ENCODE measurements at regions of chr6 and their contacts with region 1.

Region 1: GRCh38 chr6:32166411-32167061 is 2.1 kb downstream of the EGFL8 start:
- DNase-seq: no peak
- H3K4me3 ChIP-seq: no peak overlapping the region
- H3K27ac ChIP-seq: peak overlapping the region; percentile 18 to 38
- H3K4me1 ChIP-seq: no peaks in the 10 kb centered on the region
- H3K27me3 ChIP-seq: no peaks in the 10 kb centered on the region
- CTCF ChIP-seq: no peak
- POLR2A ChIP-seq: no peak

Region 2: GRCh38 chr6:32123681-32124080 is 42.9 kb before region 1 on chr6:
- intact Hi-C with region 1: loop called (anchors 1 kb)
- DNase-seq: no peak
- H3K4me3 ChIP-seq: no peak overlapping the region
- H3K27ac ChIP-seq: no peak overlapping the region
- H3K4me1 ChIP-seq: peaks cover 6 to 17% of the 10 kb centered on the region in 2 donors
- H3K27me3 ChIP-seq: no peaks in the 10 kb centered on the region
- CTCF ChIP-seq: no peak
- POLR2A ChIP-seq: no peak

Region 3: GRCh38 chr6:32195652-32195901 is 29.0 kb after region 1 on chr6:
- intact Hi-C with region 1: no loop called
- DNase-seq: peak; percentile 100
- H3K4me3 ChIP-seq: peak overlapping the region; percentile 73 to 92 (median 87)
- H3K27ac ChIP-seq: peak overlapping the region; percentile 100
- H3K4me1 ChIP-seq: peaks cover 3 to 10% of the 10 kb centered on the region in 2 donors
- H3K27me3 ChIP-seq: no peaks in the 10 kb centered on the region
- CTCF ChIP-seq: peak in 2 of 3 donors; percentile 45 to 58
- POLR2A ChIP-seq: no peak

Region 4: GRCh38 chr6:33570806-33571636 is 1404.5 kb after region 1 on chr6:
- intact Hi-C with region 1: loop called (anchors 5 kb)
- DNase-seq: peak; percentile 73 to 75
- H3K4me3 ChIP-seq: peak overlapping the region; percentile 55 to 68 (median 66)
- H3K27ac ChIP-seq: peak overlapping the region; percentile 89 to 93
- H3K4me1 ChIP-seq: peaks cover 0 to 6% of the 10 kb centered on the region in 2 donors
- H3K27me3 ChIP-seq: no peaks in the 10 kb centered on the region
- CTCF ChIP-seq: peak in 1 of 3 donors; percentile 27
- POLR2A ChIP-seq: no peak

Measured in breast epithelium (tissue), 4 donors.